ENCODE measurements at regions of chrX and their contacts with region 1.

Region 1: GRCh38 chrX:46029777-46030176 is 515.4 kb downstream of the ZNF674 start:
- DNase-seq: no peak
- ATAC-seq: no peak
- H3K4me3 ChIP-seq: no peak overlapping the region
- H3K27ac ChIP-seq: no peak overlapping the region
- H3K4me1 ChIP-seq: no peaks in the 10 kb centered on the region
- H3K27me3 ChIP-seq: peaks cover 0 to 23% (median 0%) of the 10 kb centered on the region in 7 donors
- CTCF ChIP-seq: no peak

Region 2: GRCh38 chrX:45449982-45450381 is 579.8 kb before region 1 on chrX:
- intact Hi-C with region 1: no loop called
- DNase-seq: no peak
- ATAC-seq: no peak
- H3K4me3 ChIP-seq: no peak overlapping the region
- H3K27ac ChIP-seq: no peak overlapping the region
- H3K4me1 ChIP-seq: peaks cover 0 to 5% (median 0%) of the 10 kb centered on the region in 9 donors
- H3K27me3 ChIP-seq: peaks cover 0 to 13% (median 0%) of the 10 kb centered on the region in 7 donors
- CTCF ChIP-seq: no peak

Region 3: GRCh38 chrX:45980726-45981125 is 49.1 kb before region 1 on chrX:
- intact Hi-C with region 1: loop called in 1 of 10 experiments (anchors 5 kb)
- DNase-seq: no peak
- ATAC-seq: no peak
- H3K4me3 ChIP-seq: no peak overlapping the region
- H3K27ac ChIP-seq: no peak overlapping the region
- H3K4me1 ChIP-seq: no peaks in the 10 kb centered on the region
- H3K27me3 ChIP-seq: peaks cover 0 to 21% (median 0%) of the 10 kb centered on the region in 7 donors
- CTCF ChIP-seq: no peak

Region 4: DNA sequence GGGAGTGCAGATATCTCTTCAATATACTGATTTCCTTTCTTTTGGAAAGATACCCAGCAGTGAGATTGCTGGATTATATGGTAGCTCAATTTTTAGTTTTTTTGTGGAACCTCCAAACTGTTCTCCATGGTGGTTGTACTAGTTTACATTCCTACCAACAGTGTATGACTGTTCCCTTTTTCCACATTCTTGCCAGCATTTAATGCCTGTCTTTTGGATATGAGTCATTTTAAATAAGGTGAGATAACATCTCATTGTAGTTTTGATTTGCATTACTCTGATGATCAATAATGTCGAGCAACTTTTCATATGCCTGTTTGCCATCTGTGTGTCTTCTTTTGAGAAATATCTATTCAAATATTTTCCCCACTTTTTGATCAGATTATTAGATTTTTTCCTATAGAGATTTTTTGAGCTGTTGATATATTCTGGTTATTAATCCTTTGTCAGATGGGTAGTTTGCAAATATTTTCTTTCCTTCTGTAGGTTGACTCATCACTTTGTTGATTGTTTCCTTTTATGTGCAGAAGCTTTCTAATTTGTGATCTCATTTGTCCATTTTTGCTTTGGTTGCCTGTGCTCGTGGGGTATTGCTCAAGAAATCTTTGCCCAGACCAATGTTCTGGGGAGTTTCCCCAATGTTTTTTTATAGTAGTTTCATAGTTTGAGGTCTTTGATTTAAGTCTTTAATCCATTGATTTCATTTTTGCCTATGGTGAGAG is 37.2 kb before region 1 on chrX:
- intact Hi-C with region 1: no loop called
- DNase-seq: no peak
- ATAC-seq: no peak
- H3K4me3 ChIP-seq: no peak overlapping the region
- H3K27ac ChIP-seq: no peak overlapping the region
- H3K4me1 ChIP-seq: no peaks in the 10 kb centered on the region
- H3K27me3 ChIP-seq: peaks cover 0 to 6% (median 0%) of the 10 kb centered on the region in 7 donors
- CTCF ChIP-seq: no peak

Region 5: DNA sequence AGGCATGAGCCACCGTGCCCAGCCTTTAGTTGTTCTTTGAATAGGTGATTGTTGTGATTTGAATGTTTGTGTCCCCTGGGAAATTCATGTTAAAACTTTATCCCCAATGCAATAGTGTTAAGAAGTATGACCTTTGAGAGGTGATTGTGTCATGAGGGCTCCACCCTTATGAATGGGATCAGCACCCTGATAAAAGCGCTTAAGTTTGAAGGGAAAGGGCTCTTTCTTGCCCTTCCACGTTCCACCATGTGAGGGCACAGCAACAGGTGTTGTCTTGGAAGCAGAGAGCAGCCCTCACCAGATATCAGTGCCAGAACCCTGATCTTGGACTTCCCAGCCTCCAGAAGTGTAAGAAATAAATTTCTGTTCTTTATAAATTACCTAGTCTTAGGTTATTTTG is 773.4 kb after region 1 on chrX:
- intact Hi-C with region 1: no loop called
- DNase-seq: no peak
- ATAC-seq: no peak
- H3K4me3 ChIP-seq: no peak overlapping the region
- H3K27ac ChIP-seq: no peak overlapping the region
- H3K4me1 ChIP-seq: no peaks in the 10 kb centered on the region
- H3K27me3 ChIP-seq: peaks cover 0 to 12% (median 0%) of the 10 kb centered on the region in 7 donors
- CTCF ChIP-seq: no peak